ENCODE measurements at regions of chr13 and their contacts with region 1.

Region 1: GRCh38 chr13:81929988-81930387 is 1589.1 kb upstream of the SPRY2 start:
- DNase-seq: peak; percentile 44
- H3K4me3 ChIP-seq: no peak overlapping the region
- H3K27ac ChIP-seq: no peak overlapping the region
- H3K4me1 ChIP-seq: no peaks in the 10 kb centered on the region
- H3K27me3 ChIP-seq: no peaks in the 10 kb centered on the region
- CTCF ChIP-seq: peak; percentile 55

Region 2: DNA sequence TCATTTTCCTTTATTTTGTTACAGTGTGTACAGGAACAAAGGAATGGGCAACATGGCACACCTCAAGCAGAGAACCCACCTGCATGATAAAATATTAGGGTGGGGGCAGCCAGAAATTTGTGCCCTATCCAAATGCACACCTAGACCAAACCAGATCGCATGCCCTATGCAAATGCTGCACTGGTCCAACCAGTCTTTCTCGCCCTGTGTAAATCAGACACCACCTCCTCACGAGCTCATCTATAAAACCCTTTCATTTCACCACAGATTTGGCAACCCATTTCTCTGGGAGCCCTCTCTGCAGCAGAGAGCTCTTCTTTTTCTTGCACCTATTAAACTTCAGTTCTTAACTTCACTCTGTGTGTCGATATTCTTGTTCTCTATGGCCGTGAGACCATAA is 393.1 kb after region 1 on chr13:
- CTCF ChIA-PET with region 1: interaction called, 3 read pairs
- POLR2A ChIA-PET with region 1: no interaction called
- intact Hi-C with region 1: loop called (anchors 5 kb)
- DNase-seq: no peak
- H3K4me3 ChIP-seq: no peak overlapping the region
- H3K27ac ChIP-seq: no peak overlapping the region
- H3K4me1 ChIP-seq: no peaks in the 10 kb centered on the region
- H3K27me3 ChIP-seq: no peaks in the 10 kb centered on the region
- CTCF ChIP-seq: no peak

Region 3: GRCh38 chr13:82330499-82330898 is 400.5 kb after region 1 on chr13:
- CTCF ChIA-PET with region 1: no interaction called
- POLR2A ChIA-PET with region 1: no interaction called
- intact Hi-C with region 1: loop called (anchors 2 kb)
- DNase-seq: peak; percentile 29
- H3K4me3 ChIP-seq: no peak overlapping the region
- H3K27ac ChIP-seq: no peak overlapping the region
- H3K4me1 ChIP-seq: peaks cover 5% of the 10 kb centered on the region
- H3K27me3 ChIP-seq: no peaks in the 10 kb centered on the region
- CTCF ChIP-seq: peak; percentile 57

Measured in A673 (cell line).